ENCODE measurements at regions of chr16 and their contacts with region 1.

Region 1: GRCh38 chr16:66357153-66357928 is 9.2 kb upstream of the CDH5 start:
- DNase-seq: peak; percentile 27
- H3K4me3 Mint-ChIP-seq: no peak overlapping the region
- H3K27ac Mint-ChIP-seq: no peak overlapping the region
- H3K4me1 Mint-ChIP-seq: peaks cover 5% of the 10 kb centered on the region
- H3K27me3 Mint-ChIP-seq: peaks cover 49% of the 10 kb centered on the region

Region 2: DNA sequence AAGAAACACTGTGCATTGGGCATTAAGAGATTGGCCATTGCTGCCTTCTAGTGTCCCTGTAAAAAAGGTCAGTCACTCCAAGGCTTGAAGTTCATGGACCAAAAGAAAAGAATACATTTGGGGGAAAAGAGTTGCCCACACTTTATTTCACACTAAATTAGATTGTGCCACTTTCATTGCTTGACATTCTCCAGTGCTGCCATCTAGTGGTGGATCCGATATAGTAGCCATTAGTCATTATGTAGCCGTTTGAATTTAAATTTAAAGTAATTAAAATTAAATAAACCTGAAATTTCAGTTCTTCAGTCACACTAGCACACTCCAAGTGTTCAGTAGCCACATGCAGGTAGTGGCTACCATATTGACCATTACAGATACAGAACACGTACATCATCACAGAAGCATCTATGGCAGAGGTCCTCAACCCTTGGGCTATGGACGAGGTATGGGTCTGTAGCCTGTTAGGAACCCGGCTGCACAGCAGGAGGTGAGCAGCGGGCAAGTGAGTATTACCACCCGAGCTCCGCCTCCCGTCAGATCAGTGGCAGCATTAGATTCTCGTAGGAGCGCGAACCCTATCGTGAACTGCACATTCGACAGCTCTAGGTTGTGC is 12.7 kb before region 1 on chr16:
- CTCF ChIA-PET with region 1: interaction called, 19 read pairs
- POLR2A ChIA-PET with region 1: no interaction called
- intact Hi-C with region 1: no loop called
- DNase-seq: no peak
- H3K4me3 Mint-ChIP-seq: no peak overlapping the region
- H3K27ac Mint-ChIP-seq: no peak overlapping the region
- H3K4me1 Mint-ChIP-seq: no peaks in the 10 kb centered on the region
- H3K27me3 Mint-ChIP-seq: peaks cover 13% of the 10 kb centered on the region

Region 3: GRCh38 chr16:66370786-66371684 is 13.7 kb after region 1 on chr16:
- CTCF ChIA-PET with region 1: interaction called, 11 read pairs
- POLR2A ChIA-PET with region 1: no interaction called
- intact Hi-C with region 1: no loop called
- DNase-seq: no peak
- H3K4me3 Mint-ChIP-seq: no peak overlapping the region
- H3K27ac Mint-ChIP-seq: no peak overlapping the region
- H3K4me1 Mint-ChIP-seq: no peaks in the 10 kb centered on the region
- H3K27me3 Mint-ChIP-seq: no peaks in the 10 kb centered on the region

Region 4: DNA sequence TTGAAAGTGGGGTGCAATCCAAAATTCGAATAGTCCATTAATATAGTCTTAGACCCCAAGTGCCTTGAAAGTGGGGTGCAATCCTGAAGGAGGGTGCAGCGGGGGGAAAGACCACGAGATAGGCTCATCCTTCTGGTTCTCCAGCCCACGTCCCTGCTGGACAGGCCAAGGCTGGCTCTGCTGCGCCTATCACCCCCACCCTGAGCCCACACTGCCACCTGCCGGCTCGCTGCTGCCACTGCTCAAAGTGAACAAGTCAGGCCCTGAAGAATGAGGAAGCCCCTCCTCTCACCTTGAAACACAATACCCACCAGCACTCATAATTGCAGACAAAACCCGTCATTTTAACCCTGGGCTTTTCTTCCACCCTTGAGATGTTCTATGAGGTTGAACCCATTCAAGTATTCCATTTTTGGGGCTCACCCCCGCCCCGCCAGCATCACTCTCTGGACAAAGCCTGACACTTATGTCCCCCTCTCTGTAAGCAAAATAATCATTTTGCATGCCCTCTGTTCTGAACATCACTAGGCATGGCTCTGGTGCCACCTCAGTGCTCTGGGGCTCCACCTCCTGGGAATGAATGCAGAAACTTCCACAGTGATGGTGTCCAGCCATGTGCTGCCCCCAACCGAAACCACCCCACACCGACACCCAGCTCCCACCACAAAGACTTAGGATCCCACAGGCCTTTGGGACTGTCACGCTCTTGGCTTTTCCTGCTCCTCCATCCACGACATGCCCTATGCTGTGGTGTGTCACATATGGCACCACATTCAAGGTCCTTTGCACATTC is 126.5 kb after region 1 on chr16:
- CTCF ChIA-PET with region 1: interaction called, 3 read pairs
- POLR2A ChIA-PET with region 1: no interaction called
- intact Hi-C with region 1: loop called (anchors 1 kb)
- DNase-seq: peak; percentile 85
- H3K4me3 Mint-ChIP-seq: no peak overlapping the region
- H3K27ac Mint-ChIP-seq: peak overlapping the region; percentile 79
- H3K4me1 Mint-ChIP-seq: peaks cover 19% of the 10 kb centered on the region
- H3K27me3 Mint-ChIP-seq: no peaks in the 10 kb centered on the region

Region 5: DNA sequence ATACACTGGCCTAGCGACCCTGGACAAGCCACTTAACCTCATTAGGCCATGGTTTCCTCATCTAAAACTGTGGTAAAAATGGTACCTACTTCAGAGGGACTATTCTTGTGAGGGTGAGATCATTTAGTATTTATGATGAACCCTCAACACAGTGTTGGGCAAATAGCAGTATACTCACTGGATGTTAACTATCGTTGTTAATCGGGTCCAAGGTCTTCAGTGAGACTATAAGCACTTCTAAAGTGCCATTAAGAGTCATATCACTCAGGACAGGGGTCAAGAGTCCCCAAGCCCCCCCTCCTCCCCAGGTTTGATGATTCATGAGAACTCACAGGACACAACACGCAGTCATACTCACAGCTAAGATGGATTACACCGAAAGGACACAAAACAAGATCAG is 181.6 kb after region 1 on chr16:
- CTCF ChIA-PET with region 1: no interaction called
- POLR2A ChIA-PET with region 1: no interaction called
- intact Hi-C with region 1: no loop called
- DNase-seq: no peak
- H3K4me3 Mint-ChIP-seq: no peak overlapping the region
- H3K27ac Mint-ChIP-seq: peak overlapping the region; percentile 3
- H3K4me1 Mint-ChIP-seq: peaks cover 12% of the 10 kb centered on the region
- H3K27me3 Mint-ChIP-seq: no peaks in the 10 kb centered on the region

Measured in activated CD4-positive, alpha-beta memory T cell treated with anti-CD3 and anti-CD28 coated beads for 36 hours (primary cell).